ENCODE measurements at regions of chr1 and their contacts with region 1.

Region 1: GRCh38 chr1:199084293-199084692 is 445.5 kb downstream of the PTPRC start:
- DNase-seq: no peak
- CTCF ChIP-seq: no peak

Region 2: DNA sequence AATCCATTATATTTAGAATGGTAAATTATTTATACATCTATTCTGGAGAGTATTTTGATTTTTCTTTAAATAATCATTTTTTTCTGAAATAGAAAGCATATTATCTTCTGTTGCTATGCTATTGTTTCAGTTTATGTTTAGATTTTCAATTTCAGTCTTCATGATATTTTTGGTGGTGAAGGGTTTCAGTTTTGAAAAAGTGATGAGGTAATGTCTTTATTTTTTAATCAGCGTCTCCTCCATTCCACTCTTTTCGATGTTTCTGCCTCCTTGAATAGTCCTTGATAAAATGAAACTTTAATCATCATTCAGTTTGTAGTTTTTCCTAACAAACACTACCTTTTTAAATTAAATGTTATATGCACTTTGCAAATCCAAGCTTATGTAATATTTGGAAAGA is 16.8 kb before region 1 on chr1:
- CTCF ChIA-PET with region 1: interaction called, 14 read pairs
- POLR2A ChIA-PET with region 1: no interaction called
- DNase-seq: no peak
- CTCF ChIP-seq: no peak

Measured in GM10248 (cell line).